Endothelial cell of umbilical vein (primary cell): ENCODE measurements at regions of chr20 and their contacts with region 1.

Region 1: GRCh38 chr20:57391074-57391554 is at the start of gene RBM38:
- DNase-seq: peak; percentile 56
- H3K4me3 ChIP-seq: peak within 1 kb of the TSS; percentile 65 to 84 (median 69)
- H3K27ac ChIP-seq: peak within 1 kb of the TSS; percentile 16
- H3K4me1 ChIP-seq: peaks cover 24% of the 10 kb centered on the region
- H3K27me3 ChIP-seq: no peaks in the 10 kb centered on the region
- CTCF ChIP-seq: no peak
- POLR2A ChIP-seq: no peak
- total RNA-seq, gene RBM38: 22.1 and 27.5 TPM in 2 replicates

Region 2: DNA sequence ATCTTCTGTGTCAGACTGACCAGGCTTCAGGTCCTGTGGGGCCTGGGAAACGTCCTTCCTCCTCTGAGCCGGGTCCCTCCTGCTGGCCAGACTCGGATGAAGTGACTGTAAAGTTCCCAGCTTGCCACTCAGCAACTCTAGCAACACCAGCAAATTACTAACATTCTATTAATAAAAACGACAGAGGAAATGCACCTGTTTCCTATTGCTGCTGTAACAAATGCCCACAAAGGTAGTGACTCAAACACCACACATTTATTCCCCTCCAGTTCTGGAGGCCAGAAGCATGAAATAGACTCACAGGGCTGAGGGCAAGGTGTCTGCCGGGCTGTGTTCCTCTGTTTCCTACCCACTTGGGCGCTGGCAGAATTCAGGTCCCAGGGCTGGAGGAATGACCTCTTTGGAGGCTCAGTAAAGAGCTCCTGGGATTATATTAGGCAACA is 85.0 kb after region 1 on chr20:
- CTCF ChIA-PET with region 1: interaction called, 5 read pairs
- POLR2A ChIA-PET with region 1: no interaction called
- dilution Hi-C with region 1: no loop called
- intact Hi-C with region 1: loop called (anchors 1 kb)
- DNase-seq: peak; percentile 79
- H3K4me3 ChIP-seq: no peak overlapping the region
- H3K27ac ChIP-seq: no peak overlapping the region
- H3K4me1 ChIP-seq: peaks cover 12% of the 10 kb centered on the region
- H3K27me3 ChIP-seq: peaks cover 2 to 18% of the 10 kb centered on the region in 2 experiments
- CTCF ChIP-seq: no peak
- POLR2A ChIP-seq: no peak

Region 3: GRCh38 chr20:57718490-57719271 is 327.6 kb after region 1 on chr20:
- CTCF ChIA-PET with region 1: no interaction called
- POLR2A ChIA-PET with region 1: no interaction called
- dilution Hi-C with region 1: no loop called
- intact Hi-C with region 1: loop called (anchors 10 kb)
- DNase-seq: peak; percentile 97
- H3K4me3 ChIP-seq: peak overlapping the region in 1 of 3 experiments; percentile 11
- H3K27ac ChIP-seq: no peak overlapping the region
- H3K4me1 ChIP-seq: peaks cover 4% of the 10 kb centered on the region
- H3K27me3 ChIP-seq: peaks cover 2 to 11% of the 10 kb centered on the region in 2 experiments
- CTCF ChIP-seq: no peak
- POLR2A ChIP-seq: no peak

Region 4: DNA sequence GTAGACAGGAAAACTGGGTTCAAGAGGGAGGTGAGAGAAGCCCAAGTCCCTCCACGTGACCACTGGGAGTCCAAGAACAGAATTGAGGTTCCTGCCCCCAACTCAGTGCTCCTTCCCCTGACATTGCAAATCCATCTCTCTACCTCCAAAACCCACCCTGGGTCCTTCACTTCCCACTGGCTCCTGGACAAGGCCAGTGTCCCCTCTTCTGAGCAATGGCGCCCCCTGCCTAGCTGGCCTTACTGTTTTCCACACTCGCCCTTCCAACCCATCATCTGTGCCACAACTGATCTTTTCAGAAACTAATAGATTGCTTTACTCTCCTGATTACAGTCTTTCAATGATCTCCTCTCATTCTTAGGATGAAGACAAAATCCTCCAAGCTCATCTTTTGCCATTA is 637.0 kb after region 1 on chr20:
- CTCF ChIA-PET with region 1: no interaction called
- POLR2A ChIA-PET with region 1: no interaction called
- dilution Hi-C with region 1: no loop called
- intact Hi-C with region 1: no loop called
- DNase-seq: no peak
- H3K4me3 ChIP-seq: no peak overlapping the region
- H3K27ac ChIP-seq: no peak overlapping the region
- H3K4me1 ChIP-seq: no peaks in the 10 kb centered on the region
- H3K27me3 ChIP-seq: peaks cover 0 to 1% of the 10 kb centered on the region in 2 experiments
- CTCF ChIP-seq: peak; percentile 4 to 18
- POLR2A ChIP-seq: no peak

Region 5: DNA sequence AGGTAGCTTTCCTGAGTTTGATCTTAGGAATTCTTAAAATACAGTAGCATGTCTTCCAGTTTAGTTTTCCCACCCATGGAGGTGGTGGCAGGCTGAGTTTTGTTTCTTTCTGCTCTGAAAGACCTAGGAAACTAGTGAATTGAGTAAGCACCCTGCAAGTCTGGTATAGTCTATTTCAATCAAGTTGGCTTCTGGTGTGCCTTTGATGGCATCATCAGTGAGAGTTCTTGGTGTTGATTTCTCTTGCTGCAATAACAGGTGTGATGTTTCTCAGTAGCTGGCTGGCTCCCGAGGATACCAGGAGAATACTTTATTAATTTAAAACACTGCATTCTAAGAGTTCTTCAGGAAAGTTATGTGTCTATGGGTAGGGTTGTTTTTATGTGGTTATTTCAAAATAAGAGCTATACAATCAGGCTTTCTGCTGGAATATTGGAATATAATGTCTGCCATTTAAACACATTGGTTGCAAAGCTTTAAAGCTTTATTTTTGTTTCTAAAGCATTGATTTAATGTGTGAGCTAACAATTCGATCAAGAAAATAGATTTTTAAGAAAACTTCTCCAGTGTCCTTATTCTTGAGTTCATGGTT is 1016.9 kb after region 1 on chr20:
- CTCF ChIA-PET with region 1: no interaction called
- POLR2A ChIA-PET with region 1: no interaction called
- dilution Hi-C with region 1: no loop called
- intact Hi-C with region 1: loop called (anchors 10 kb)
- DNase-seq: no peak
- H3K4me3 ChIP-seq: no peak overlapping the region
- H3K27ac ChIP-seq: peak overlapping the region; percentile 41
- H3K4me1 ChIP-seq: peaks cover 32% of the 10 kb centered on the region
- H3K27me3 ChIP-seq: no peaks in the 10 kb centered on the region
- CTCF ChIP-seq: no peak
- POLR2A ChIP-seq: no peak